MCF 10A (cell line): ENCODE measurements at regions of chr1 and their contacts with region 1.

Region 1: DNA sequence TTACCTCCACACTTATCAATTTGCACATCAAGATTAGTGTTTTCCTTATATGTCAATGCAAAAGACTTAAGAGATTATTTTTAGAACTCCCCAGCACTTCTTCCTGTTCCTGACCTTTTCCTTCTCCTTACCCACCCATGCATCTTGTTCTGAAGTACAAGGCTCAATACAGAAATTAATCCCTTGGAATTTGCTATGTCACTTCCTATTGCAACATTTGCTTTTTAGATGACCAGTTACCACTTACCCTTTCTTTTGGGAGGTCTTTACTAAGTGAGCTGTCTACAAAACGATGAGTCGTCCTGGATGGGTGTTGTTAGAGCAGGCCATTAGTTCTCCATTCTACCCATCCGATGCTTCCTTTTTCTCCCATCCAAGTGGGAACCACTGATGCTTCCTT is 221.2 kb downstream of the FMN2 start:
- DNase-seq: peak; percentile 97
- H3K4me3 Mint-ChIP-seq: no peak overlapping the region
- H3K27ac Mint-ChIP-seq: peak overlapping the region; percentile 40
- H3K4me1 Mint-ChIP-seq: peaks cover 34% of the 10 kb centered on the region
- H3K27me3 Mint-ChIP-seq: no peaks in the 10 kb centered on the region
- CTCF ChIP-seq: no peak

Region 2: DNA sequence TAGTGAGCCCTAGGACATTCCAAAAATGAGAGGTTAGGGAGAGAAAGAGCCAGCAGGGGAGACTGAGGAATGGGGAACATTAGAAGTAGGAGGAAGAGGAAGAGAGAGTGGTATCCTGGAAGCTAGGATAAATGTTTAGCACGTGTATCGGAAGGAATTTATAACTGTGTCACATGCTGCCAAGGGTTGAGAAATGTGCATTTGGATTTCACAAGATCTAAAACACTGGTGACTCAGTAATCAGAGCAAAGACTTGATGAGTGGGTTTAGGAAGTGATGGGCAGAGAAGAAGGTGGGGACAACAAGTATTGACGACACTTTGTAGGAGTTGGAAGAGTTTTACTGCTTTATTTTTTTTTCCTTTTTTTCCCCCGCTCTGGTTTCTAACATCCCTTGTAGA is 27.3 kb before region 1 on chr1:
- CTCF ChIA-PET with region 1: no interaction called
- POLR2A ChIA-PET with region 1: interaction called, 4 read pairs
- intact Hi-C with region 1: loop called (anchors 1 kb)
- DNase-seq: peak; percentile 96
- H3K4me3 Mint-ChIP-seq: peak overlapping the region; percentile 1
- H3K27ac Mint-ChIP-seq: peak overlapping the region; percentile 88
- H3K4me1 Mint-ChIP-seq: peaks cover 22% of the 10 kb centered on the region
- H3K27me3 Mint-ChIP-seq: no peaks in the 10 kb centered on the region
- CTCF ChIP-seq: no peak

Region 3: GRCh38 chr1:241756582-241756981 is 1443.7 kb after region 1 on chr1:
- CTCF ChIA-PET with region 1: no interaction called
- POLR2A ChIA-PET with region 1: no interaction called
- intact Hi-C with region 1: no loop called
- DNase-seq: no peak
- H3K4me3 Mint-ChIP-seq: no peak overlapping the region
- H3K27ac Mint-ChIP-seq: no peak overlapping the region
- H3K4me1 Mint-ChIP-seq: peaks cover 7% of the 10 kb centered on the region
- H3K27me3 Mint-ChIP-seq: no peaks in the 10 kb centered on the region
- CTCF ChIP-seq: no peak